IMR-90 (cell line): ENCODE measurements at regions of chr4 and their contacts with region 1.

Region 1: GRCh38 chr4:83284193-83285054 is at the start of gene COQ2:
- DNase-seq: peak; percentile 92
- ATAC-seq: peak; percentile 96
- H3K4me3 ChIP-seq: peak within 1 kb of the TSS; percentile 74
- H3K27ac ChIP-seq: peak within 1 kb of the TSS; percentile 68
- H3K4me1 ChIP-seq: no peaks in the 10 kb centered on the region
- H3K27me3 ChIP-seq: no peaks in the 10 kb centered on the region
- CTCF ChIP-seq: 0 out of 2 replicates have a peak, but pooled peaks have one; percentile 11
- POLR2A ChIP-seq: peak; percentile 84
- RAD21 ChIP-seq: peak; percentile 1; the same call in 1 of the 2 replicates
- total RNA-seq, gene COQ2: 7.3 and 8.9 TPM in 2 replicates

Region 2: DNA sequence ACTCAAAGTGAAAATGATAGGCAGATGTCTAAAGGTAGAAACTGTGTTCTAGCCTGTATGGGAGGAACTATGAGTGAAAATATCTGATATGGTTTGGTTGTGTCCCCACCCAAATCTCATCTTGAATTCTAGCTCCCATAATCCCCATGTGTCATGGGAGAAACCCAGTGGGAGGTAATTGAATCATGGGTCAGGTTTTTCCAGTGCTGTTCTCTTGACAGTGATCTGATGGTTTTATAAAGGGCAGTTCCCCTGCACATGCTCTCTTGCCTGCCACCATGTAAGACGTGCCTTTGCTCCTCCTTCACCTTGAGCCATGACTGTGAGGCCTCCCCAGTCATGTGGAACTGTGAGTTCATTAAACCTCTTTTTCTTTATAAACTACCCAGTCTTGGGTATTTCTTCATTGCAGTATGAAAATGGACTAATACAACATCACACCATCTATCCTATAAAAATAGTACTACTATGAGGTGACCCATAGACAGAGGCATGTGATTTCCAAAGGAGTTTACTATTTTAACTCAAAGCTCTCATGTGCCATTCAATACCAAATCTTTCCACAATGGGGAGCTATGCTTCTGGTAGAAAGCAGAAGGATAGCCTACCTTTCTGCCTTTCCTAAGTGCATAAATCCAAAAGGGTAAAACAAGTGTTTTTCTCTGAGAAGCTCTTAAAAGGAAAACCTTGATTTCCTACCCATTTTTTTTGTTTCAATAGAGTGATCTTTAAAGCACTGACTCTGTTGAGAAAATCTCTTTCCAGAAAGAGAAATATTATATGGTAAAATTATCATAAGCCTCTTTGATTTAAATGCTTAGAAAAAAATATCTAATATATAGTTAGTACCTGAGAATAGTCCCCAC is 432.3 kb before region 1 on chr4:
- CTCF ChIA-PET with region 1: no interaction called
- POLR2A ChIA-PET with region 1: no interaction called
- dilution Hi-C with region 1: no loop called
- in situ Hi-C with region 1: no loop called
- intact Hi-C with region 1: loop called (anchors 10 kb)
- DNase-seq: peak; percentile 49
- ATAC-seq: peak; percentile 51; the same call in 1 of the 2 replicates
- H3K4me3 ChIP-seq: no peak overlapping the region
- H3K27ac ChIP-seq: no peak overlapping the region
- H3K4me1 ChIP-seq: no peaks in the 10 kb centered on the region
- H3K27me3 ChIP-seq: no peaks in the 10 kb centered on the region
- CTCF ChIP-seq: peak; percentile 43
- POLR2A ChIP-seq: no peak
- RAD21 ChIP-seq: peak; percentile 42

Region 3: DNA sequence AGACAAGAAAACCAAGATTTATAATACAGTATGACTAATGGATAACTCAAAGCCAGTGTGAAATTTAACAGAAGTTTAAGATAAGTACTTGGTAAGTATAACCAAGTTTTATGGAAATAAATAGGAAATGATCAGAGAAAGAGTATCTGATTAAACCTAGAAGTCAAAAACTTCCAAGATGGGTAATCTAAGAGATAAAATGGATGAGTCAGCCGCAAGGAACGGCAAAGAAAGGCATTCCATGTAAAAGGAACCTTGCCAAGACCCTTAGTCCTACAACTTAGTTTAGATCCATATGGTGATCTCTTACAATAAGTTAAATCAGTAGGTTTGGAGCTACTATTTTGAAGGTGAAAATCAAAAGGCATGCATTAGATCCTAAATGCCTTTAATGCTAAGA is 308.6 kb before region 1 on chr4:
- CTCF ChIA-PET with region 1: no interaction called
- POLR2A ChIA-PET with region 1: no interaction called
- dilution Hi-C with region 1: no loop called
- in situ Hi-C with region 1: no loop called
- intact Hi-C with region 1: no loop called
- DNase-seq: peak; percentile 78
- ATAC-seq: peak; percentile 42; the same call in 1 of the 2 replicates
- H3K4me3 ChIP-seq: no peak overlapping the region
- H3K27ac ChIP-seq: no peak overlapping the region
- H3K4me1 ChIP-seq: peaks cover 1% of the 10 kb centered on the region; the same call in 1 of the 2 replicates
- H3K27me3 ChIP-seq: no peaks in the 10 kb centered on the region
- CTCF ChIP-seq: no peak
- POLR2A ChIP-seq: no peak
- RAD21 ChIP-seq: no peak

Region 4: GRCh38 chr4:83012687-83013419 is 271.6 kb before region 1 on chr4:
- CTCF ChIA-PET with region 1: interaction called, 3 read pairs
- POLR2A ChIA-PET with region 1: no interaction called
- dilution Hi-C with region 1: no loop called
- in situ Hi-C with region 1: no loop called
- intact Hi-C with region 1: loop called (anchors 1 kb)
- DNase-seq: peak; percentile 97
- ATAC-seq: peak; percentile 95
- H3K4me3 ChIP-seq: peak overlapping the region; percentile 70
- H3K27ac ChIP-seq: peak overlapping the region; percentile 75
- H3K4me1 ChIP-seq: no peaks in the 10 kb centered on the region; the same call in 1 of the 2 replicates
- H3K27me3 ChIP-seq: no peaks in the 10 kb centered on the region
- CTCF ChIP-seq: peak; percentile 52
- POLR2A ChIP-seq: peak; percentile 68
- RAD21 ChIP-seq: peak; percentile 44

Region 5: DNA sequence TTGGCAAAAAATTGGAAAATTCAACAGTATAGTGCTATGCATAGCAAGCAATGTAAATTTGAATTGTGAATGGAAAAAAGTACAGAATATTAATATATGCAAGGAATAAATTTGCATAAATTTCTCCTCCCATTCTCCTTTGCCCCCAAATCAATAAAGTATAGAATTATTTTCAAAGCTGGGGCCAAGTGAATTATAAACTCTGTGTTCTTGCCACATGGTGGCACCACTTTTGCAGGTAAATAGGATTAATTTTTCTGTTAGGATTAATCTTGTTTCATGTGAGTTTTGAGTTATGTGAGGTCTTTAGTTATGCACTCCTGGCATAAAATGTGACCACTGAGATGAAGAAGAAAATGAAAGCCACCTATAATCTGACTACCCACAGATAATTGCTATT is 229.5 kb before region 1 on chr4:
- CTCF ChIA-PET with region 1: interaction called, 3 read pairs
- POLR2A ChIA-PET with region 1: no interaction called
- dilution Hi-C with region 1: no loop called
- in situ Hi-C with region 1: no loop called
- intact Hi-C with region 1: loop called (anchors 1 kb)
- DNase-seq: peak; percentile 15
- ATAC-seq: no peak
- H3K4me3 ChIP-seq: no peak overlapping the region
- H3K27ac ChIP-seq: no peak overlapping the region
- H3K4me1 ChIP-seq: no peaks in the 10 kb centered on the region
- H3K27me3 ChIP-seq: no peaks in the 10 kb centered on the region
- CTCF ChIP-seq: peak; percentile 46
- POLR2A ChIP-seq: no peak
- RAD21 ChIP-seq: peak; percentile 39

Region 6: GRCh38 chr4:83074086-83074704 is 210.2 kb before region 1 on chr4:
- CTCF ChIA-PET with region 1: interaction called, 3 read pairs
- POLR2A ChIA-PET with region 1: interaction called, 8 read pairs
- dilution Hi-C with region 1: no loop called
- in situ Hi-C with region 1: loop called (anchors 10 kb)
- intact Hi-C with region 1: loop called (anchors 1 kb)
- DNase-seq: peak; percentile 82
- ATAC-seq: peak; percentile 62
- H3K4me3 ChIP-seq: no peak overlapping the region
- H3K27ac ChIP-seq: no peak overlapping the region; the same call in 1 of the 2 replicates
- H3K4me1 ChIP-seq: peaks cover 4% of the 10 kb centered on the region
- H3K27me3 ChIP-seq: no peaks in the 10 kb centered on the region
- CTCF ChIP-seq: peak; percentile 72
- POLR2A ChIP-seq: no peak
- RAD21 ChIP-seq: peak; percentile 69

Region 7: GRCh38 chr4:83455281-83456129 is 171.1 kb after region 1 on chr4 and contains the starts of genes HELQ and MRPS18C:
- CTCF ChIA-PET with region 1: no interaction called
- POLR2A ChIA-PET with region 1: no interaction called
- dilution Hi-C with region 1: no loop called
- in situ Hi-C with region 1: loop called (anchors 10 kb)
- intact Hi-C with region 1: loop called (anchors 2 kb)
- DNase-seq: peak; percentile 99
- ATAC-seq: peak; percentile 96
- H3K4me3 ChIP-seq: peak within 1 kb of the TSS; percentile 67
- H3K27ac ChIP-seq: peak within 1 kb of the TSS; percentile 78
- H3K4me1 ChIP-seq: no peaks in the 10 kb centered on the region
- H3K27me3 ChIP-seq: no peaks in the 10 kb centered on the region
- CTCF ChIP-seq: peak; percentile 22; the same call in 1 of the 2 replicates
- POLR2A ChIP-seq: peak; percentile 97
- RAD21 ChIP-seq: no peak
- total RNA-seq, gene HELQ: 9.1 and 13.1 TPM in 2 replicates
- total RNA-seq, gene MRPS18C: 8.6 and 23.9 TPM in 2 replicates